ENCODE measurements at regions of chr3 and their contacts with region 1.

Region 1: DNA sequence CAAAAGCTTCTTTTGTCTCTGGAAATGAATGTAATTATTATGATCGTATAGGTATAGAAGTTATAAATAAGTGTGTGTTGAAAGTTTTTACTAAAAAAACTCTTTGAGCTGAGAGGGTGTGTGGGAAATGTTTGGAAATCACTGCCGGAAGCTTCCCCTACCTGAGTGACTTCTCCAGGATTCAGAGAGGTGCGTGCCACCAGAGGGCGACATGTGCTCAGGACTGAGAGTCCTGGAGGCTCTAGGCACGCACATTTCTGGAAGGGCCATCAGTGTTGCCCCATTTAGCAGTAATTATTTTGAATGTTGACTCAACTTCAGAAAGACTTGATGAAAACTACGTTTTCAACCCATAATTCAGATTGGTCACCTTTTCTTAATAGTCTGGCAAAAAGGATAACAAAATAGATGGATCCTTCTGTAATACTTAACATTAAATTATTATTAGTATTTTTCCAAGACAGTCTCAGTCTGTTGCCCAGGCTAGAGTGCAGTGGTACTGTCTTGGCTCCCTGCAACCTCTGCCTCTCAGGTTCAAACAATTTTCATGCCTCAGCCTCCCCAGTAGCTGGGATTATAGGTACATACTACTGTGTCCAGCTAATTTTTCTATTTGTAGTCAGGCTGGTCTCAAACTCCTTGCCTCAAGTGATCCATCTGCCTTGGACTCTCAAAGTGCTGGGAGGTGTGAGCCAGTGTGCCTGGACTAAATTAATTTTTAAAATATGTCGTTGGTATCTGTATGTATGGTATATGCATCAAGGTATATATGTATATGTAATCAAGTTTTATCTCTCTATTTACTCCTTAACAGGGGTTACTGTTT is 34.5 kb downstream of the GPR171 start:
- DNase-seq: peak; percentile 85
- H3K4me3 Mint-ChIP-seq: no peak overlapping the region
- H3K27ac Mint-ChIP-seq: no peak overlapping the region
- H3K4me1 Mint-ChIP-seq: peaks cover 47% of the 10 kb centered on the region
- H3K27me3 Mint-ChIP-seq: no peaks in the 10 kb centered on the region

Region 2: DNA sequence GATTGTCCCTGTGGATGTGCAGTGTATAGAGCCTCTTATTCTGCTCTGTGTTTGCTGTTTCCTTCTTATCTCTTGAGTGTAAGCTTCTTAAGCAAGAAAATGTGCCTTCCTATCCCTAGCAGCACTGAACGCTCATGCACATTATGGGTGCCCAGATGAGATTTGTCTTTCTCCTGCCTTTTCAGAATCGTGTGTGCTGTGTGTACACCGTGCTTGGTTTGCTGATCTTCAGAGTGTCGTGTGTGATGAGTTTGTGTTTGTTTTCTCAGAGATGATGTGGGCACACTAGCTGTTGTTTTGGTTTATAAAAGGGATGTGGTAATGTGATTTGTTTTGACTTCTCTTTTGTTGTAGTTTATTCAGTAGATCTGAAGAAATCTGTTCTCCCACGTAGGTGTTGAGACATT is 14.8 kb after region 1 on chr3:
- CTCF ChIA-PET with region 1: interaction called, 10 read pairs
- POLR2A ChIA-PET with region 1: no interaction called
- DNase-seq: peak; percentile 52
- H3K4me3 Mint-ChIP-seq: peak overlapping the region; percentile 48
- H3K27ac Mint-ChIP-seq: peak overlapping the region; percentile 87
- H3K4me1 Mint-ChIP-seq: peaks cover 61% of the 10 kb centered on the region
- H3K27me3 Mint-ChIP-seq: no peaks in the 10 kb centered on the region

Region 3: DNA sequence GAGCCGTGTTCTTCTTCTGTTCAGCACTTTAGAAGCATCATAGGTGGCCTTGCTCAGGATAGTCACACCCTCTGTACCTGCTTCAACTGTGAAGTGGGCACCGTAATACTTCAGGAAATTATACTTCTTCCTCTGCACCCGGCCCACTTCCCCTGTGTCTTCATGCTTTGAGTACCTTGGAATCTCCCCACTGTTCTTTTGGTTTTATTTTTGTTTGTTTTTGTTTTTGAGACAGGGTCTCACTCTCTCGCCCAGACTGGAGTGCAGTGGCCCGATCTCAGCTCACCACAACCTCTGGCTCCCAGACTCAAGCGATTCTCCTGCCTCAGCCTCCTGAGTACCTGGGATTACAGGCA is 108.2 kb after region 1 on chr3:
- CTCF ChIA-PET with region 1: interaction called, 45 read pairs
- POLR2A ChIA-PET with region 1: no interaction called
- DNase-seq: peak; percentile 33
- H3K4me3 Mint-ChIP-seq: peak overlapping the region; percentile 26
- H3K27ac Mint-ChIP-seq: peak overlapping the region; percentile 74
- H3K4me1 Mint-ChIP-seq: peaks cover 51% of the 10 kb centered on the region
- H3K27me3 Mint-ChIP-seq: no peaks in the 10 kb centered on the region

Region 4: DNA sequence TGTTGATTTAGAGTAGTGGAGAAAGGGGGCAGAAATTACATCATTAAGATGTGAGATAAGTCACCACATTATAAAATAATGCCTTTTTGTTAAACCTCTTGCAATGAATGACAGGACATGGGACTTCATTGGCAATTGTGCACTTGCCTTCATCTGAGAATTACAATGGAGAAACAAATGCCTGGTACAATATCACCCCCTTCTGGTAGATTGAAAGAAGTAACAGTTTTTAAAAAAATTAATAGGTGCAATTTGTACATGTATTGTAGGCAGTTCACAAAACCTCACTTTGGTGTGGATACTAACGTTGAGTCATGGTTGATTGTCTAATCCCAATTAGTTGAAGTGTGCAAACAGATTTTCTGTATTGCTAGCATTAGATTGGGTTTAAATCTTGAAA is 114.4 kb after region 1 on chr3:
- CTCF ChIA-PET with region 1: interaction called, 45 read pairs
- POLR2A ChIA-PET with region 1: no interaction called
- DNase-seq: peak; percentile 36
- H3K4me3 Mint-ChIP-seq: no peak overlapping the region
- H3K27ac Mint-ChIP-seq: peak overlapping the region; percentile 60
- H3K4me1 Mint-ChIP-seq: peaks cover 46% of the 10 kb centered on the region
- H3K27me3 Mint-ChIP-seq: no peaks in the 10 kb centered on the region

Region 5: GRCh38 chr3:151501923-151502632 is 333.6 kb after region 1 on chr3:
- CTCF ChIA-PET with region 1: no interaction called
- POLR2A ChIA-PET with region 1: no interaction called
- DNase-seq: no peak
- H3K4me3 Mint-ChIP-seq: no peak overlapping the region
- H3K27ac Mint-ChIP-seq: no peak overlapping the region
- H3K4me1 Mint-ChIP-seq: no peaks in the 10 kb centered on the region
- H3K27me3 Mint-ChIP-seq: peaks cover 2% of the 10 kb centered on the region